Panc1 (cell line): ENCODE measurements at regions of chr2 and their contacts with region 1.

Region 1: DNA sequence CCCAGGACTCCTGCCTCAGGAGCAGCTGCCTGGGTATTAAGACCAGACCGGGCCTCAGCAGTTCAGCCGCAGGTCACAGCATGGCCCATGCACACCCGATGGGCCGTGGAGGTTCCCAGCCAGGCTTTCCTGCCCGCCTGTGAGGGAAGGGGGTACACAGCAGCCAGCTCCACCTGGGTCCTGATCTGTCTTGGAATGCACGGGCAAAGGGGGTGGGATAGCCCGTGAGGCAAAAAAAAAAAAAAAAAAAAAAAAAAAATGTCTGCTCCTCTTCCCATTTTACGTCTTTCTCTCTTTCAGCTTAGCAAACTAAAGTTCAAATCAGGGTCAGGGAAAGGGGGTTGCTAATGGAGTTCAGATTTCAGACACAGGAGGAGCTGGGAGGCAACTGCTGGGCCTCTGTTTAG is 385.2 kb downstream of the TNS1 start:
- DNase-seq: no peak
- ATAC-seq: no peak
- H3K4me3 ChIP-seq: no peak overlapping the region
- H3K27ac ChIP-seq: no peak overlapping the region
- H3K4me1 ChIP-seq: no peaks in the 10 kb centered on the region
- H3K27me3 ChIP-seq: no peaks in the 10 kb centered on the region; the same call in 1 of the 2 replicates
- CTCF ChIP-seq: no peak

Region 2: DNA sequence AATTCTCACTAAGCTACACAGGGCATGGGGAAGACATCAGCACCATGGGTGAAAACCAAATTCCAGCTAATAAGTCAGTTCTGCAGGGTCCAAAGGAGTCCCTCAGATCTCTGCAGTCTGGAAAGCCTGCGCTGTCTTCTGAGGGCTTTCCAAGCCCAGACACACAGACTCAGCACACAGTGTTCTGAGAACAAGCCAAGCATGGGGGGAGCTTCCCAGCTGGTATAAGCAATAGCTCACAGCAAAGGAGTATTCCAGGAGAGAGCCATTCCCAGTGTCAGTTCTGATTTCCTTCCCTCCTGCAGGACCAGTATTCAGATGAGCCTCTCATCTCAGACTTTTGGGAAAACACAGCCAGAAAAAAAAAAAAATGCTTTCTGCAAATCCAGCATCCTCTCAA is 14.4 kb after region 1 on chr2:
- CTCF ChIA-PET with region 1: no interaction called
- POLR2A ChIA-PET with region 1: no interaction called
- in situ Hi-C with region 1: no loop called
- intact Hi-C with region 1: no loop called
- DNase-seq: no peak
- ATAC-seq: no peak
- H3K4me3 ChIP-seq: no peak overlapping the region
- H3K27ac ChIP-seq: no peak overlapping the region
- H3K4me1 ChIP-seq: no peaks in the 10 kb centered on the region
- H3K27me3 ChIP-seq: peaks cover 3% of the 10 kb centered on the region; the same call in 1 of the 2 replicates
- CTCF ChIP-seq: no peak

Region 3: DNA sequence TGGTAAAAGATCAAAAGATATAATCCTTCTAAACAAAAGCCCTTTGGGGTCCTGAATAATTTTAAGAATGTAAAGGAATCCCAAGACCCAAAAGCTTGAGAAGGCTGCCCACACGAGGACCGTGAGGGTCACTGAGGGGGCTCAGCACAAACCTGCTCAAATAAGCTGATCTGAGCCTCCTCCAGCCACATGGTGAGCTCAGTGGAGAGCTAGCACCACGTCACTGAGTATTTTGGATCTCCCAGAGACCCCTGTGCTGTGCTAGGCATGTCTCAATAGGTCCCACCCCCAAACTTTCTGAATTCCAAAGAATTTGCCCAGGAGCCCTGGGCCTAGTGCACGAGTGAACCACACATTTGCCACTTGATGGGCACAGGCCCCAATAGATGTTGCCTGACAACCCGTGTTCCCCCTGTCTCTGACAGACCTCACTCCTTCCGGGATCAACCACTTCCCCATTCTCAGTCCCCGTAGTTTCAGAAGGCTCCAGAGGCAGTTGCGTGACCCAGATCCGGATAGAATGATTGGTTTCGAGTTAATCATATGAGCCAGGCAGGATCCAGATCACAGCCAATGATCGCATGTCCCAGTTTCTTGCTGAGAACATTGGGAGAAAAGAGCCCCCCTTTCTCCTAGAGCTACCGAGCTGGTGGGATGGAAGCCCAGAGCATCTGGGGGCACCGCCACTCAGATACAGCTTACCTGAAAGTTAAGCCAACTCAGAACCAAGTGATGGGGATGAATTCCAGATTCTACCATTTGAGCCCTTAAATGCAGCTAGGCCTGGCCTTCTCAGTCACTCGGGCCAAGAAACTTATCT is 181.3 kb after region 1 on chr2:
- CTCF ChIA-PET with region 1: no interaction called
- POLR2A ChIA-PET with region 1: no interaction called
- in situ Hi-C with region 1: no loop called
- intact Hi-C with region 1: no loop called
- DNase-seq: no peak
- ATAC-seq: no peak
- H3K4me3 ChIP-seq: no peak overlapping the region
- H3K27ac ChIP-seq: no peak overlapping the region
- H3K4me1 ChIP-seq: no peaks in the 10 kb centered on the region
- H3K27me3 ChIP-seq: no peaks in the 10 kb centered on the region
- CTCF ChIP-seq: no peak

Region 4: GRCh38 chr2:217864963-217865772 is 247.5 kb after region 1 on chr2:
- CTCF ChIA-PET with region 1: no interaction called
- POLR2A ChIA-PET with region 1: interaction called, 20 read pairs
- in situ Hi-C with region 1: no loop called
- intact Hi-C with region 1: no loop called
- DNase-seq: no peak
- ATAC-seq: no peak
- H3K4me3 ChIP-seq: no peak overlapping the region
- H3K27ac ChIP-seq: no peak overlapping the region
- H3K4me1 ChIP-seq: no peaks in the 10 kb centered on the region
- H3K27me3 ChIP-seq: no peaks in the 10 kb centered on the region
- CTCF ChIP-seq: no peak